ENCODE measurements at regions of chr10 and their contacts with region 1.

Region 1: DNA sequence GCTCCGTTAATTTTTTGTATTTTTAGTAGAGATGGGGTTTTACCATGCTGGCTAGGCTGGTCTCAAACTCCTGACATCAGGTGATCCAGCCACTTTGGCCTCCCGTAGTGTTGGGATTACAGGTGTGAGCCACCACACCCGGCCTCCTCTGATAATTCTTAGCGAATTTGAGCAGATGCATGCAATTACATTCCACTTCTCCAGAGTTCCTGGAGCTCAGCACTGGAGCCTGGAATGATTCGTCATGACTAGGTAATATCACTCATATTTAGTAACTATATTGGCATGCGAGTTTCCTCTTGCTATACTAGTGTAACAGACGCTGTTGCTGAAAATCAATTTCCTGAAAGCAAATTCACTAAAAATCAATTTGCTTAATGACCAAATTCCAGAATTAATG is 86.8 kb downstream of the MKX start:
- DNase-seq: no peak
- H3K4me3 ChIP-seq: no peak overlapping the region
- H3K27ac ChIP-seq: no peak overlapping the region
- H3K4me1 ChIP-seq: no peaks in the 10 kb centered on the region
- H3K27me3 ChIP-seq: peaks cover 0 to 10% (median 0%) of the 10 kb centered on the region in 3 donors
- CTCF ChIP-seq: no peak
- EP300 ChIP-seq: no peak
- POLR2A ChIP-seq: no peak

Region 2: GRCh38 chr10:27558612-27559020 is 100.2 kb before region 1 on chr10:
- intact Hi-C with region 1: loop called (anchors 10 kb)
- DNase-seq: peak; percentile 42 to 82
- H3K4me3 ChIP-seq: no peak overlapping the region
- H3K27ac ChIP-seq: no peak overlapping the region
- H3K4me1 ChIP-seq: peaks cover 0 to 6% (median 0%) of the 10 kb centered on the region in 4 donors
- H3K27me3 ChIP-seq: no peaks in the 10 kb centered on the region
- CTCF ChIP-seq: peak in 5 of 7 experiments; percentile 44 to 78 (median 57)
- EP300 ChIP-seq: no peak
- POLR2A ChIP-seq: no peak

Measured in stomach (tissue), 19 donors.